Ascending aorta (tissue), 2 donors: ENCODE measurements at regions of chr17 and their contacts with region 1.

Region 1: GRCh38 chr17:82450170-82451106 is at the start of gene CYBC1:
- DNase-seq: peak; percentile 61 to 96
- H3K4me3 ChIP-seq: peak within 1 kb of the TSS; percentile 87 to 100
- H3K27ac ChIP-seq: peak within 1 kb of the TSS; percentile 90 to 94
- H3K4me1 ChIP-seq: peaks cover 8 to 15% of the 10 kb centered on the region in 2 donors
- H3K27me3 ChIP-seq: no peaks in the 10 kb centered on the region
- CTCF ChIP-seq: no peak
- total RNA-seq, gene CYBC1: 124 TPM

Region 2: DNA sequence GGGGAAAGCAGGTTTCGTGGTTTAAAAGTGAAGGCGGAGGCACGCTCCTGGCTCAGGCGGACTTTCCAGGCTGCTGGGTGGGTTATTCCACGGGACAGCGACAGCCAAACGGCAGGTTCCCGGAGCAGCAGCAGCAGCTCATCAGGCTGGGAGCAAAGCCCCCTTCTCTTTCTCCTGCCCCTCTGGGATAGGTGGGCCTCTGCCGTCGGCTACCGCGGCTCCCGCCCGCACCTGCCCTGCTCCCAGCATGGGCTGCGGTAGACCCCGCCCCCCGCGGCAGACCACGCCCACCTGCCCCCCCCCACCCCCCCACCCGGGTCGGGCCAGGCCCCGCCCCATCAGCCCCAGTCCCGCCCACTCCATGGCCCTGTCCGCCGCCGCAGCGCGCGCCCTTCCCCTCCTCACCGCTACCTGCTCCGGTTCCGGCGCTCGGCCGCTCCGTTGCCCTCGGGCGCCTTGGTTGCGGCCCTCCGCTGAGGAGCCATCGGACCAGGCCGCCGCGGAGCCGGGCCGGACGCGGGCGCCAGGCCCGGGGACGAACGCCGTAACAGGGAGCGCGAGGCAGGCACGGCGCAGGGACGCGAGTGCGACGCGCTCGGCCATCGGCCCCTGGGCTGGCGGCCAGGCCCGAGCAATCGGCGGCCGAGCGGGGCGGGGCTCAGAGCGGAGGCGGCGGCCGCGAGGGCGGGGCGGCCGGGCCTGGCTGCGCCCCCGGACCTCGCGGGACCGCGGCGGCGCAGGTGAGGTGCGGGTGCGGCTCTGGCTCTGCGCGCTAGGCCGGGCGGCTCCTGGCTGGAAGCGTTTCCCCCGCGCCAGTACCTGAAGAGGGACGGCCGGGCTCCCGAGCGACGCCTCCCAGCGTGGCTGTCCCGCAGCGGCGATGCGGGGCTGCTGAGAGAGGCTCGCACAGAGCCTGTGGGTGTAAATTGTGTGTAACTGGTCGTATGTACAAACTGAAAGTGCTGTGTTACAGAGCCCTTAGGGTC is 32.1 kb before region 1 on chr17 and contains the starts of genes HEXD and OGFOD3:
- intact Hi-C with region 1: loop called (anchors 1 kb)
- DNase-seq: peak in 1 of 2 donors; percentile 89
- H3K4me3 ChIP-seq: peak within 1 kb of the TSS; percentile 79 to 96
- H3K27ac ChIP-seq: peak within 1 kb of the TSS; percentile 75 to 92
- H3K4me1 ChIP-seq: peaks cover 4 to 10% of the 10 kb centered on the region in 2 donors
- H3K27me3 ChIP-seq: no peaks in the 10 kb centered on the region
- CTCF ChIP-seq: peak in 1 of 3 experiments; percentile 32
- total RNA-seq, gene HEXD: 40.4 TPM
- total RNA-seq, gene OGFOD3: 36.6 TPM